Right ventricle myocardium superior (tissue), 1 donor: ENCODE measurements at regions of chr6 and their contacts with region 1.

Region 1: GRCh38 chr6:166989427-166990032 is 9.7 kb upstream of the CEP43 start:
- DNase-seq: no peak
- ATAC-seq: peak; percentile 62

Region 2: DNA sequence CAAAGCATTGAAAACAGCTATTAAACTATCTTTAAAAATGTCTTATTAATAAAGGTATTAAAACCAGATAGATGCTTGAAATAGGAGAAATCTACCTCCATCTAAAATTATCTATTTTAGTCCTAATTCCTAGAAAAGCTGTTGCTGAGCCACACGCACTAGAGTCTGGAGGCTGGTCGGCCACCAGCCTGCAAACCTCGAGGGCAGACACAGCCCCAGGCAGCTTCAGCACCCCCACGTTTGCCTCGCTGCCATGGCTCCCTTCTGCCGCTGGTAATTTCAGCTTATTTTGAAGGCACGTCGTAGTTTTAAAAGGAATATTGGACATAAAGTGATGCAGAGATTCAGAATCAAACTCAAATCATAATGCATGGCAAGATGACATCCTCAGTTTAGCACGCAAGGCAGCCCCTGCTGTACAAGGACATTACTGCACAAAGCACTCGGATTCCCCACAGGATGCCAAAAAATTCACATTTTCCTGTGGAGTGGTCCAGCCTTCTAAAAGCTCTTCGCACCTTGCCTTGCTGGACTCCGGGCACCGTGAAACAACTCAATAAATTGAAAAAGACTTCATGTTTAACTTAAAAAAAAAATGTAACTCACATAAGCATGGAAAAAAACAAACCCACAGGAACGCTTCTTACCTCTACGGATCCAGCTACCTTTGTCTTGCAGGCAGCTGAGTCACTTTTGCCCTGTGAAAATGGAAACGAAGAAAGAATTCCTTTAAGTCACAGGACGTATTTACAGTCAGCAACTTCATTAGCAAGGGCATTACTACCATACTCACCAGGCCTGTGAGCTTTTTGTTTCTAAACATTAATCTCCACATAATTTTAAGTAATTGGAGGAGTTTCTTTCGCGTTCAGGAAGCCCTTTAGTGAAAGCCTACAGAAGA is 219.1 kb before region 1 on chr6:
- intact Hi-C with region 1: no loop called
- DNase-seq: no peak
- ATAC-seq: no peak

Region 3: GRCh38 chr6:166786704-166787293 is 202.7 kb before region 1 on chr6:
- intact Hi-C with region 1: loop called (anchors 5 kb)
- DNase-seq: no peak
- ATAC-seq: peak; percentile 67